Tibial artery (tissue), 4 donors: ENCODE measurements at regions of chr12 and their contacts with region 1.

Region 1: DNA sequence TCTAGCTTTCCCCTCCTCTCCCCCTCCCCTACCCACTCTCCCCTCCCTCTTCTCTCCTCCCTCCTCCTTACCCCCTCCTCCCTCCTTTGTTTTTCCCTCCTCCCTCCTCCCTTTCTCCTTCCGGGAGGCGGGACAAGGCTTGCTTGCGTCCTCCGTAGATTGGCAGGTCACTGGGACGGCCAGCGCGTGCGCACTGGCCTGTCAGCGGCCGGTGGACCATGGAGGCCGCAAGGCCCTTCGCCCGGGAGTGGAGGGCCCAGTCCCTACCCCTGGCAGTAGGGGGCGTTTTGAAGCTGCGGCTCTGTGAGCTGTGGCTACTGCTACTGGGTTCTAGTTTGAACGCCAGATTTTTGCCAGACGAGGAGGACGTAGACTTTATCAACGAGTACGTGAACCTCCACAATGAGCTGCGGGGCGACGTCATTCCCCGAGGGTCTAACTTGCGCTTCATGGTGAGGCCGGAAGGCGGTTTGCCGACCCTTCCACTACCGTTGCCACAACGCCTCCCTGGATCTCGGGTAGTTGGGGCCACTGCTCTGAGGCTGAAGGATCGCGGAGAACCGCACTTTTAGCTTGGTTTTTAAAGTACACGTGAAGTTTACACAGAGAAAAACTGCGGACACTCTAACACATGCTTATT is at the start of gene GLIPR1L2:
- DNase-seq: peak; percentile 96 to 98
- H3K4me3 ChIP-seq: peak within 1 kb of the TSS; percentile 62 to 69
- H3K27ac ChIP-seq: peak within 1 kb of the TSS; percentile 86 to 93
- H3K4me1 ChIP-seq: peaks cover 0 to 28% (median 5%) of the 10 kb centered on the region in 4 donors
- H3K27me3 ChIP-seq: no peaks in the 10 kb centered on the region
- CTCF ChIP-seq: peak; percentile 74 to 82

Region 2: DNA sequence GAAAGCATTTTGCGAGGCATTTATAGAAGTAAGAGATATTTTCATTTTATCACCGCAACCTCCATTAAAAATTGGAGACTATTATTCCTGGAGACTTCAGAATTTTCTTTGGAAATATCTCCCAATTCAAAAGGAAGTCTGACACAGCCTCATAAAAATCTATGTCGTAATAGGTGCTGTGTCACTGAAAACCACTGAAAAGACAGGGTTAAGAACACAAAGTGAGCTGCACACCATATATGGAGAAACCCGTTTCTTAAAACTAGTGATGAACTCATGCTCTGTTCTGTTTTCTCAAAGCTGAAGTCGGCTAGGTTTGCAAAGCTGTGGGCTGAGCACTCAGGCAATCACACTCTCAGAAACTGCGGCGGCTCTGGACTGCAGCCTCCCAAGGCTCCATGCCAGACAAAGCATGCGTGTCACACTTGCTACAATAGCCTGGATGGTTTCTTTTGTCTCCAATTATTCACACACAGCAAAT is 89.5 kb after region 1 on chr12 and contains the start of gene GLIPR1:
- intact Hi-C with region 1: loop called (anchors 10 kb)
- DNase-seq: peak; percentile 83 to 90
- H3K4me3 ChIP-seq: peak within 1 kb of the TSS; percentile 57 to 70
- H3K27ac ChIP-seq: peak within 1 kb of the TSS; percentile 85 to 88
- H3K4me1 ChIP-seq: peaks cover 0 to 45% (median 24%) of the 10 kb centered on the region in 4 donors
- H3K27me3 ChIP-seq: no peaks in the 10 kb centered on the region
- CTCF ChIP-seq: no peak

Region 3: DNA sequence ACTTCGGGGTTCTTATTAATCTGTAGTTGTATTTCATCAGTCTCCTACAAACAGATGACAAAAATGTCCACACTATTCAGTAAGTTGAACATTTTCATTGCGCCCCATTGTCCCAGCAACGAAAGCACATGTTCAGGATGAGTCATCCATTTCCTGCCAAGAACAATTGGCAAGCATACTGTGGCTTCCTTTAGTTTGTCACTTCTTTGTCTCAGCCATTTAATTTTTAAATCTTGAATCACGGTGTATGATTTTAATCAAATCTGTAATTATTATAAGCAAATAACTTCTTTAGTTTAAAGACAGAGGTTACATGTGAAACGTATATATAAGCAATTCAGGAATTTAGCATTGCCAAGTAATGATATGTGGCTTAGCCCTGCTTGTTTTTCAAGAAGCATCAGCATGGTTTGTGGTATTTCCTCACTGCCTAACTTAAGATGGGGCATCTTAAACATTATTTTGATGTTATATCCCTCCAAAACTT is 331.7 kb after region 1 on chr12:
- intact Hi-C with region 1: no loop called
- DNase-seq: peak in 1 of 2 donors; percentile 77
- H3K4me3 ChIP-seq: no peak overlapping the region
- H3K27ac ChIP-seq: peak overlapping the region; percentile 38 to 43
- H3K4me1 ChIP-seq: peaks cover 0 to 22% (median 10%) of the 10 kb centered on the region in 4 donors
- H3K27me3 ChIP-seq: no peaks in the 10 kb centered on the region
- CTCF ChIP-seq: no peak